ENCODE measurements at regions of chr9 and their contacts with region 1.

Region 1: DNA sequence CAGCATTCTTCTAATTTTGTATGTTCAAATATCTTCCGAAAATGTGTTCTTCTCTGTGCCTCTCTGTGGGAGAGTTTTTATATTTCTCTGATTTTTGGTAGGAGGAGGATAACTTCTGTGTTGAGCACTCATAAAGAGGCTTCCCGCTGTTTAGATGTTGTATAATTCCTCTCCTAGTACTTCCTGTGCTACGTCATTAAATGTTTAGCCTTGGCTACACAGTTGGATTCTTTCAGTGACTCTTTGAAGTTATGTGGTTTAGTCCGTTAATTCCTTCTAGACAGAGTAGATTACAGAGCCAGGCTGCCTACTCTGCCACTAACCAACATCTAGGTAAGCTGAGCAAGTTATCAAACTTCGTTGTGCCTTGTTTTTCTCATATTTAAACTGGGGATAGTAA is 302.6 kb downstream of the OSTF1 start:
- DNase-seq: no peak
- ATAC-seq: no peak

Region 2: GRCh38 chr9:75358846-75359245 is 32.1 kb before region 1 on chr9:
- intact Hi-C with region 1: loop called in 1 of 2 experiments (anchors 2 kb)
- DNase-seq: no peak
- ATAC-seq: no peak

Region 3: DNA sequence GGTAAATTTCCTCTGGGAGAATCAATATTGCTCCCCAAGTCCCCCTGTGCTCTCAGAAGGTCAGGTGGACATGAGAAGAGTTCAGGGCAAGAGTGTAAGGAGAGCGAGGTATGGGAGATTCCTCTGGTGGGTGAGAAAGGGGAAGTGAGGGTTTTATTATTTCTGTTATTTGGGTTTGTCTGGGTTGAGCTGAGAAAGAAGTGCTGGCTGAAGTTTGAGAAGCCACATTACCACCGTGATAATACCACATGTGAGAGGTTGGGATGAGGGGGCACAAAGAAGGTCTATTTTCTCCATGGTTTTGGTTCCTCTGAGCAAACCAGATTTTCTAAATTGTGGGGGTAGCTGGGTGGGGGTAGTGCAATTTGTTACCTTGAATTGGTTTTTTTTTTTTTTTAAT is 47.8 kb after region 1 on chr9:
- intact Hi-C with region 1: no loop called
- DNase-seq: no peak
- ATAC-seq: no peak

Region 4: DNA sequence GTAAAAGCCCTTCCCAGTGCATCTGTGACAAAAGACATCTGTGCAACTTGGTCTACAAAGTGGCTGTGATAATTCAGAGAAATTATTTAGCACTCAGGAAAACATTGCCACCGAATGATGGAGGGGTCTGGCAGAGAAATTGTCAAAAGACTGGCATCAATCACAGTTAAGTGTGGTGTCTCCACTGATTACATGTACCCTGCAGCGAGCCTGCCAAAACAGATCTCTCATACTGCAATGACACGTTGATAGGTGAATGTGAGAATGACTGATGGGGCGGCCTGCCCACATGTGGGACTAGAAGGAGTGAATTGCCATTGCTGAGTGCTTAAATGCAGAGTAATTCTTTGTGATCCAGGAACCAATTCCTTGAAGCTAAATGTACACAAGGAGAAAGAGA is 363.1 kb after region 1 on chr9:
- intact Hi-C with region 1: loop called in 1 of 2 experiments (anchors 5 kb)
- DNase-seq: peak; percentile 57
- ATAC-seq: peak; percentile 93 to 97

Measured in left cardiac atrium (tissue), 4 donors.